ENCODE measurements at regions of chr4 and their contacts with region 1.

Region 1: GRCh38 chr4:53015681-53016080 is 153.6 kb downstream of the RASL11B start:
- DNase-seq: no peak
- H3K4me3 Mint-ChIP-seq: no peak overlapping the region
- H3K27ac Mint-ChIP-seq: no peak overlapping the region
- H3K4me1 Mint-ChIP-seq: peaks cover 24% of the 10 kb centered on the region
- H3K27me3 Mint-ChIP-seq: no peaks in the 10 kb centered on the region

Region 2: GRCh38 chr4:52979020-52979419 is 36.7 kb before region 1 on chr4:
- intact Hi-C with region 1: no loop called
- DNase-seq: no peak
- H3K4me3 Mint-ChIP-seq: no peak overlapping the region
- H3K27ac Mint-ChIP-seq: no peak overlapping the region
- H3K4me1 Mint-ChIP-seq: no peaks in the 10 kb centered on the region
- H3K27me3 Mint-ChIP-seq: no peaks in the 10 kb centered on the region

Region 3: GRCh38 chr4:53132132-53132896 is 116.6 kb after region 1 on chr4:
- intact Hi-C with region 1: loop called (anchors 5 kb)
- DNase-seq: no peak
- H3K4me3 Mint-ChIP-seq: no peak overlapping the region
- H3K27ac Mint-ChIP-seq: peak overlapping the region; percentile 79
- H3K4me1 Mint-ChIP-seq: peaks cover 31% of the 10 kb centered on the region
- H3K27me3 Mint-ChIP-seq: no peaks in the 10 kb centered on the region

Region 4: GRCh38 chr4:53365486-53366300 is 350.0 kb after region 1 on chr4 and contains the start of gene SCFD2:
- intact Hi-C with region 1: loop called (anchors 5 kb)
- DNase-seq: peak; percentile 95
- H3K4me3 Mint-ChIP-seq: peak within 1 kb of the TSS; percentile 98
- H3K27ac Mint-ChIP-seq: peak within 1 kb of the TSS; percentile 88
- H3K4me1 Mint-ChIP-seq: peaks cover 39% of the 10 kb centered on the region
- H3K27me3 Mint-ChIP-seq: peaks cover 5% of the 10 kb centered on the region
- total RNA-seq, gene SCFD2: 39.4 and 40.5 TPM in 2 replicates

Region 5: DNA sequence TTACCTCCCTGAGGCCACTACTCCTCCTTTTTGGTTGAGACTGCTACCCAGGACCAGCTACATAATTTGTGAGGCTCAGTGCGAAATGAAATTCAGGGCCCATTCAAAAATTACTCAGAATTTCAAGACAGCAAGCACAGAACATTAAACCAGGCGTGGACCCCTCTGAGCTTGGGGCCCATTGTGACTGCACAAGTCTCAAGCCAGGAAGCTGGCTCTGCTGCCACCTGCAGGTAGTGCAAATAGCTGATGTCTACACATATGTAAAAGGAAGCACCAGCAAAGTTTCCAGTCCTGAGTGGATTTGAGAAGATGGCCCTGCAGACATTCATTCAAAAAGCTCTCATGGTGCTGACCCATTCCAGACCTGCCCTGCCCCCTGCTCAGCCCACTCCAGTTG is 789.0 kb after region 1 on chr4:
- intact Hi-C with region 1: loop called (anchors 10 kb)
- DNase-seq: peak; percentile 1
- H3K4me3 Mint-ChIP-seq: no peak overlapping the region
- H3K27ac Mint-ChIP-seq: no peak overlapping the region
- H3K4me1 Mint-ChIP-seq: no peaks in the 10 kb centered on the region
- H3K27me3 Mint-ChIP-seq: no peaks in the 10 kb centered on the region